A549 (cell line): ENCODE measurements at regions of chr1 and their contacts with region 1.

Region 1: DNA sequence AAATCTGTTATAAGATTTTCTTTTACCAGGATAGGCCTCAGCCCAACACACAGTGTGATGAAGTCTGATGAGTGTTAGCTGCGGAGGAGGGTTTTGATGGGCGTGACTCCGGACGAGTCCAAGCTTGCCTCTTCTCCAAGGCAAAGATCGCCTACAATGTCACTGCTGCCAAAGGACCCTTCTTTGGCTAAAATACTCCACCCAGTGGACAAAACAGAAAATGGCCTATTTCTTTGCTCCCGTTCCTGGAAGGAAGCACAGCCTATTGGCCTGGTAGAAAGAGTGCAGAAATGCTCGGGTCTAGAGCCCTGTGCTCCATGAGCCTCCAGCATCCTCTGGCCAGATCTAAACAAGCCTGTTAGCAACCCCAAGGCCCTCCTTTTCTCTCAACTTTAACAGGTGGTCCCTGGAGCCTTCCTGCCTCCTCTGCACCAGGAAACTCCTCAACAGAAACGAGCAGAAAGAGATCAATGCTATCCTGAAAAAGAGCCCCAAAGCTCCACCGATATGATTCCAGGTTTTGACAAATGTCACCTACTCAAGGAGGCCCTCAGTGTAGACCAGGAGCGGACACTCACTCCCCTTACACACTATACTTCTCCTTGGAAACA is 3.4 kb upstream of the CASQ2 start:
- DNase-seq: peak; percentile 38 to 75
- ATAC-seq: peak; percentile 99
- H3K4me3 ChIP-seq: 0 out of 3 replicates have a peak overlapping the region, but pooled peaks have one; percentile 27
- H3K27ac ChIP-seq: peak overlapping the region; percentile 59 to 79; a peak in 5 of 6 replicates
- H3K4me1 ChIP-seq: peaks cover 4% of the 10 kb centered on the region; the same call in 1 of the 3 replicates
- CTCF ChIP-seq: peak; percentile 59
- EP300 ChIP-seq: no peak
- POLR2A ChIP-seq: no peak
- RAD21 ChIP-seq: peak; percentile 75 to 79

Region 2: GRCh38 chr1:115744646-115745275 is 27.2 kb before region 1 on chr1:
- CTCF ChIA-PET with region 1: no interaction called
- POLR2A ChIA-PET with region 1: no interaction called
- DNase-seq: no peak
- ATAC-seq: no peak
- H3K4me3 ChIP-seq: no peak overlapping the region
- H3K27ac ChIP-seq: no peak overlapping the region
- H3K4me1 ChIP-seq: no peaks in the 10 kb centered on the region
- CTCF ChIP-seq: no peak
- EP300 ChIP-seq: no peak
- POLR2A ChIP-seq: no peak
- RAD21 ChIP-seq: no peak

Region 3: GRCh38 chr1:115782571-115783281 is 10.8 kb after region 1 on chr1:
- CTCF ChIA-PET with region 1: interaction called, 11 read pairs
- POLR2A ChIA-PET with region 1: no interaction called
- DNase-seq: peak in 1 of 2 experiments; percentile 72
- ATAC-seq: peak; percentile 94 to 99
- H3K4me3 ChIP-seq: no peak overlapping the region
- H3K27ac ChIP-seq: peak overlapping the region; percentile 58 to 60; a peak in 4 of 6 replicates
- H3K4me1 ChIP-seq: peaks cover 17% of the 10 kb centered on the region; the same call in 2 of the 3 replicates
- CTCF ChIP-seq: no peak
- EP300 ChIP-seq: no peak
- POLR2A ChIP-seq: no peak
- RAD21 ChIP-seq: no peak